ENCODE measurements at regions of chr12 and their contacts with region 1.

Region 1: GRCh38 chr12:95072900-95073697 is at the start of gene NR2C1:
- H3K4me3 ChIP-seq: peak within 1 kb of the TSS; percentile 87
- H3K27ac ChIP-seq: peak within 1 kb of the TSS; percentile 82
- H3K4me1 ChIP-seq: no peaks in the 10 kb centered on the region
- CTCF ChIP-seq: peak; percentile 90

Region 2: DNA sequence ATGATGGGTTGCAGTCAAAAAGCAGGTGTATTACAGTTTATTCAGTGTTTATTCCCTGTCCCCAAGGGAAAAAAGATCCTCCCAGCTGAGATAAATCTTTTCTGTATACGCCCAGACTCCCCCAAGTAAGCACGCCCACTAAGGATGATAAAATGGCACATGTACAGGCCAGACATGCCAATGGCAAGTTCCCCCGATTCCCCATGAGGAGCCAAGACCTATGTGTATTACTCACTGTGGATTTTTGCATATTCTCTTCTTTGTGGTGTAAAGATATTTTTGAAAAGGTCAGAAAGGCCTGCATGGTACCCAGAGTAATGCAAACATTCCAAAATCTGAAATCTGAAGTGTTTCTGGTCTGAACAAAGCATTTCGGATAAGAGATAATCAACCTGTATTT is 21.9 kb before region 1 on chr12:
- CTCF ChIA-PET with region 1: no interaction called
- POLR2A ChIA-PET with region 1: no interaction called
- H3K4me3 ChIP-seq: no peak overlapping the region
- H3K27ac ChIP-seq: no peak overlapping the region
- H3K4me1 ChIP-seq: no peaks in the 10 kb centered on the region
- CTCF ChIP-seq: no peak

Region 3: DNA sequence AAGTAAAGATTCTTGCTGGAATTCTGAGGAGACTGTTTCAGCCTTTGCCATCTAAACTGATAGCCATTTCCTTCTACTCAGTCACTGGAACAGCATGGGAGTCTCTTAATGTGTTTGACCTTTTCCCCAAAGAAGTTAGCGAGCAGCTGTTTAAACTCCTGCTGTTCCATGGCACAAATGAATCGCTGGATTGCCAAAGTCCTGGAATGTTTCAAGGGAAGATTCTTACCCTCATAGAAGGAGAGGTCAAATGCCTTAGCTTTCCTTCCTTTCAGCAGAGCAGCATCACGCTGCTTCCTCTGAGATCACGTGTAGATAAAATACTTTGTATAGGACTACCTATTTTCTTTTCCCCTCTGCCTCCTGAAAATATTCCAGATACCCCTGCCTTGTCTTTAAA is 10.8 kb after region 1 on chr12:
- CTCF ChIA-PET with region 1: interaction called, 28 read pairs
- POLR2A ChIA-PET with region 1: interaction called, 12 read pairs
- H3K4me3 ChIP-seq: no peak overlapping the region
- H3K27ac ChIP-seq: no peak overlapping the region
- H3K4me1 ChIP-seq: peaks cover 15% of the 10 kb centered on the region
- CTCF ChIP-seq: no peak

Region 4: DNA sequence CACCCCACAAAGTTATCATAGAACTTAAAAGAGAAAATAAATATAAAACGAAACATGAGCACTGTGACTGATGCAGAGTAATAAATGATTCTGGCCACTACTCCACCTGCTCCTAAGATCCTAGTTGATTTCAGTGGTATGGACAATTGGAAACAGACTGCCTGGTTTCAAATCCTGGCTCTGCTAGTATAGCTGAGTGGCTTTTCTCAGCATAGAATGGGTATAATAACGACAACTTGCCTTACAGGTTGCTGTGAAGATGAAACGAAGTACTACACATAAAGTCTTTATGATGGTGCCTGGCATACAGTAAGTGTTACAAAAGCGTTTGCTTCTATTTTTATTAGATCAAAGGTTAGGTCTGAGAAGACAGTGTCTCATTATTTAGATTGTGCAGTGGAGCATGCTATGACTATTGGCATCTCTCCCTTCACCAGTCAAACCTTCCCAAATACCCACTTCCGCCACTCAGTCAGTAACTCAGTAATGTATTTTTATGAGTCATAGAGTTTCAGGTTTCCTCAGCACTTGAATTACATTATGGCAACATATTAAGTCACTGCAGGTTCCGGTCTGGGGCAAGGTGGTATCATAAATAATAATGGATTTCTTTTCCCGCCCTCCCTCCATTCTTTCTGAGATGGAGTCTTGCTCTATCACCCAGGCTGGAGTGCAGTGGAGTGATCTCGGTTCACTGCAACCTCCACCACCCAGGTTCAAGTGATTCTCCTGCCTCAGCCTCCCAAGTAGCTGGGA is 30.0 kb after region 1 on chr12:
- CTCF ChIA-PET with region 1: interaction called, 10 read pairs
- POLR2A ChIA-PET with region 1: interaction called, 3 read pairs
- H3K4me3 ChIP-seq: no peak overlapping the region; the same call in 1 of the 2 replicates
- H3K27ac ChIP-seq: peak overlapping the region; percentile 63
- H3K4me1 ChIP-seq: peaks cover 9% of the 10 kb centered on the region
- CTCF ChIP-seq: no peak